Right ventricle myocardium inferior (tissue), 1 donor: ENCODE measurements at regions of chr4 and their contacts with region 1.

Region 1: GRCh38 chr4:8241895-8242696 is 27.5 kb upstream of the HTRA3 start:
- DNase-seq: peak; percentile 93
- ATAC-seq: peak; percentile 86

Region 2: GRCh38 chr4:8182858-8183725 is 59.0 kb before region 1 on chr4:
- intact Hi-C with region 1: loop called (anchors 5 kb)
- DNase-seq: peak; percentile 88
- ATAC-seq: peak; percentile 77

Region 3: DNA sequence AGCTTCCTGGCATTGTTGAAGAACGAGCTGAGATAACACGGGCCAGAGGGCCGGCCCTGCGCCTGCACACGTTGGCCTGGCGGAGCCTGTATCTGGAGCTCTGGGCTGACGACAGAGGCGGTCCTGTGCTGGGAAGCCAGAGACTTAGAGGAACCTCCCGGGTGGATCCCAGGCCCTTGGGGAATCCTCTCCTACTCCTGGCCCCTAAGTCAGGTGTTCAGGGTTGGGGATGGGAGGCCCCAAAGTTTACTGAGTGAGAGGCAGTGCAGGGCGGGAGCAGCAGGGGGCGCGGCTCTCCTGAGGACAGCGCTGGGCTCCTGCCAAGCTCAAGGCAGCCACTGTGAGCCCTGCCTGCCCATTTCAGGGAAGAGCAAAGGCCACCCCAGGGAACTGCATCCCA is 25.0 kb after region 1 on chr4:
- intact Hi-C with region 1: loop called (anchors 2 kb)
- DNase-seq: peak; percentile 92
- ATAC-seq: peak; percentile 62

Region 4: DNA sequence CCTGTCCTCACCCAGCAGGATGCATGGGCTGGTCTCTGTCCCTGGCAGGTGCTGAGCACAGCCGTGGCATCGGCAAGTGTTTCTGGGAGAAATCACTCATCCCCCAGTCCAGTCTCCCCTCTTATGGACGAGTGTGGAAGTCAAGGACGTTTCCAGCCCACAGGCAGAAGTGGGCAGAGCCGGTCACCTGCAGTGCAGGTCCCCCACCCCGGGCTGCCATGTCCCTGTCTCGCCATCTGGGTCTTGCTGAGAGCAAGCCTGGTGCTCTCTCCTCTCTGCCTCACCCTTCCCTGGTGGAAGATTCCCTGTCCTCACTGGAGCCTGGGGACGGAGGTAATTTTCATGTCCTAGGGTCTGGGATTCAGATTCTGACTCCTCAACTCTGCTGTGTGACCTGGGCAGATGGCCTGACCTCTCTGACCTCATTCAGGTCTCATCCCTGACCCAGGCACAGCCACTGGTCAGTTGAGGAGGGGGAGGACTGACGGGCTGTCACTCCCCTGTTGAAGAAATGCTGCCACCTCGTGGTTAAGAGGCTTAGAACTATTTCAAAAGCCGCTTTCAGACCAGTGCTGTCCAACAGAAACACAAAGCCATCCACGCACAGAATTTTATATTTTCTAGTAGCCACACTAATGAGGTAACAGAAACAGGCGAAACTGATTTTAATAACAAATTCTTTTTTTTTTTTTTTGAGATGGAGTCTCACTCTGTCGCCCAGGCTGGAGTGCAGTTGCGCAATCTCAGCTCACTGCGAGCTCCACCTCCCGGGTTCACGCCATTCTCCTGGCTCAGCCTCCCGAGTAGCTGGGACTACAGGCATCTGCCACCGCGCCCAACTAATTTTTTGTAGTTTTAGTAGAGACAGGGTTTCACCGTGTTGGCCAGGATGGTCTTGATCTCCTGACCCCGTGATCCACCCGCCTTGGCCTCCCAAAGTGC is 352.3 kb after region 1 on chr4:
- intact Hi-C with region 1: loop called (anchors 5 kb)
- DNase-seq: peak; percentile 62
- ATAC-seq: peak; percentile 63